GM13976 (cell line): ENCODE measurements at regions of chr4 and their contacts with region 1.

Region 1: GRCh38 chr4:2767705-2768074 is 11.6 kb upstream of the TNIP2 start:
- DNase-seq: peak; percentile 14
- CTCF ChIP-seq: no peak

Region 2: DNA sequence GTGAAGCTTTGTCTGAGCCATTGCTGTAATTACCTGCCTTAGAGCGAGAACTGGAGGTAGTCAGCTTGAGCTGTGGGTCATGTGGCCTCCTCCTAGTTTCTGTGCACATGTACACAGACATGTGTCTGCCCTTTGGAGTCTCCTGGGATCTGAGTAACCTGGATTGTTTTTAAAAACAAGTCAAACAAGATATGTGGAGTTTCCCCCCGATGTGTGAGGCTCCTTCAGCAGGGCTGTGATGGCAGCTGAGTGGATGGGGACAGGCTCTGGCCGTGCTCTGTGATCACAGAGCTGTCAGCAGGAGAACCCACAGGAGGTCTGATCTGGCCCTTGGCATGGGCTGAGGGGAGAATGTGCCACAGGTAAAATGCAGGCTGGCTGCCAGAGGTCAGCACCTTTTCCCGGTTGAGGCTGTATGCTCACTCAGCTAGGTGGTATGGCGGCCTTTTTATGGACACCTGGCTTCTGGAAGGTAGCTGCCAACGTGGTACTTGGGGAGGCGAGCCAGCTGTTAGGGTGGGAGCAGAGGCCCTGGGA is 157.1 kb after region 1 on chr4:
- in situ Hi-C with region 1: loop called (anchors 5 kb)
- DNase-seq: no peak
- CTCF ChIP-seq: no peak